ENCODE measurements at regions of chr1 and their contacts with region 1.

Region 1: GRCh38 chr1:211698161-211699026 is 23.0 kb upstream of the NEK2 start:
- DNase-seq: peak; percentile 60
- H3K4me3 ChIP-seq: no peak overlapping the region
- H3K27ac ChIP-seq: no peak overlapping the region
- H3K4me1 ChIP-seq: no peaks in the 10 kb centered on the region
- H3K27me3 ChIP-seq: peaks cover 10 to 11% of the 10 kb centered on the region in 2 experiments
- CTCF ChIP-seq: peak; percentile 96 to 98
- POLR2A ChIP-seq: no peak

Region 2: GRCh38 chr1:211680752-211681327 is 17.6 kb before region 1 on chr1:
- CTCF ChIA-PET with region 1: interaction called, 48 read pairs
- POLR2A ChIA-PET with region 1: no interaction called
- dilution Hi-C with region 1: no loop called
- intact Hi-C with region 1: no loop called
- DNase-seq: peak; percentile 86
- H3K4me3 ChIP-seq: no peak overlapping the region
- H3K27ac ChIP-seq: no peak overlapping the region
- H3K4me1 ChIP-seq: peaks cover 3% of the 10 kb centered on the region
- H3K27me3 ChIP-seq: peaks cover 0 to 2% of the 10 kb centered on the region in 2 experiments
- CTCF ChIP-seq: peak; percentile 59 to 66
- POLR2A ChIP-seq: no peak

Region 3: DNA sequence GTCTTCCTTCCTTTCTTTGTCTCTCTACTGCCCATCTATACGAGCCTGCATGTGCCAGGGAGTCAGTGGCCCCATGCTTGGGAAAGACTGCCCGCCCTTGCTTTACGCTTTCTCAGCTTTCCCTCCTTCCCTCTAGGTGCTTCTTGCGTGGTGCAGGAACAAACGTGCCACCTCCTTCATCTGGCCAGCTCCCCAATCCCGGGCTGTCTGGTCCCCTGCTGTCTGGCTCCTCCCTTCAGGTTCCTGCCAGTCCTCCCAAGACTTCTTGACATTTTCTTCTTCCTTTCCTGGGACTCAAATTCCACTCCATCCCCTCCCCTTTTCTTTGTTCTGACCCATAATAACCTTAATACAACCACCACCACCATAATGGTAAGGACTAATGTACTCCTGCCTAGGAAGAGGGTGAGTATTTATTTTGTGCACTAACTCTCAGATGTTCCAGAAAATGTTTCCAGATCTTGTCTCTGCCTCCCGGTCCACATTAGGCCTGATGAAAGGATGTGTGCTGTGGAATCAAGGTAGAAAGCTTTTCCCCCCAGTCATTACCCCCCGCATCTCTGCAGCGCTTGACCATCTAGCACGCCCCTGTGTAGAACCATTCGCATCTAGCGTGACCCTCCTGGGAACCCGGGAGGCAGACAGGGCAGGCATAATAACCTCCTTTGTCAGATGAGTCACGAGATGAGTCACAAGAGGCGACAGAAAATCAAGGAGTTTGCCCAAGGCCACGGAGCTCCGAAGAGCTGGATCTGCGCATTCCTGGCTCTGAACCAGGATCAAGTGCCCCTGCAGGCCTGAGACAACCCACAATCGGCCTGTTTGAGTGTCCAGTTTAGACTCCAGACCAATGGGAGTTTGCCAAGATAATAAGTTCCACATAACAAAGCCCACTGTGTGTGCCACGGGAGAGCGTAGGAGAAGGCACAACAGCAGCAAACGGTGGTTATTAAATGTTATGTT is 37.1 kb after region 1 on chr1:
- CTCF ChIA-PET with region 1: interaction called, 12 read pairs
- POLR2A ChIA-PET with region 1: no interaction called
- dilution Hi-C with region 1: no loop called
- intact Hi-C with region 1: no loop called
- DNase-seq: peak; percentile 40
- H3K4me3 ChIP-seq: no peak overlapping the region
- H3K27ac ChIP-seq: no peak overlapping the region
- H3K4me1 ChIP-seq: peaks cover 4% of the 10 kb centered on the region
- H3K27me3 ChIP-seq: peaks cover 0 to 3% of the 10 kb centered on the region in 2 experiments
- CTCF ChIP-seq: no peak
- POLR2A ChIP-seq: no peak

Region 4: GRCh38 chr1:211761400-211761799 is 63.0 kb after region 1 on chr1:
- CTCF ChIA-PET with region 1: interaction called, 11 read pairs
- POLR2A ChIA-PET with region 1: no interaction called
- dilution Hi-C with region 1: no loop called
- intact Hi-C with region 1: no loop called
- DNase-seq: no peak
- H3K4me3 ChIP-seq: no peak overlapping the region
- H3K27ac ChIP-seq: no peak overlapping the region
- H3K4me1 ChIP-seq: no peaks in the 10 kb centered on the region
- H3K27me3 ChIP-seq: no peaks in the 10 kb centered on the region
- CTCF ChIP-seq: no peak
- POLR2A ChIP-seq: no peak

Region 5: GRCh38 chr1:211788626-211789025 is 90.2 kb after region 1 on chr1:
- CTCF ChIA-PET with region 1: interaction called, 10 read pairs
- POLR2A ChIA-PET with region 1: no interaction called
- dilution Hi-C with region 1: no loop called
- intact Hi-C with region 1: loop called (anchors 5 kb)
- DNase-seq: no peak
- H3K4me3 ChIP-seq: no peak overlapping the region
- H3K27ac ChIP-seq: no peak overlapping the region
- H3K4me1 ChIP-seq: peaks cover 7% of the 10 kb centered on the region
- H3K27me3 ChIP-seq: no peaks in the 10 kb centered on the region
- CTCF ChIP-seq: no peak
- POLR2A ChIP-seq: no peak

Region 6: GRCh38 chr1:211959680-211960079 is 261.3 kb after region 1 on chr1:
- CTCF ChIA-PET with region 1: interaction called, 5 read pairs
- POLR2A ChIA-PET with region 1: no interaction called
- dilution Hi-C with region 1: no loop called
- intact Hi-C with region 1: loop called (anchors 5 kb)
- DNase-seq: no peak
- H3K4me3 ChIP-seq: no peak overlapping the region
- H3K27ac ChIP-seq: no peak overlapping the region
- H3K4me1 ChIP-seq: no peaks in the 10 kb centered on the region
- H3K27me3 ChIP-seq: no peaks in the 10 kb centered on the region
- CTCF ChIP-seq: no peak
- POLR2A ChIP-seq: no peak

Region 7: GRCh38 chr1:212368073-212368484 is 669.7 kb after region 1 on chr1:
- CTCF ChIA-PET with region 1: interaction called, 3 read pairs
- POLR2A ChIA-PET with region 1: no interaction called
- dilution Hi-C with region 1: no loop called
- intact Hi-C with region 1: loop called (anchors 1 kb)
- DNase-seq: peak; percentile 68
- H3K4me3 ChIP-seq: no peak overlapping the region
- H3K27ac ChIP-seq: no peak overlapping the region
- H3K4me1 ChIP-seq: no peaks in the 10 kb centered on the region
- H3K27me3 ChIP-seq: no peaks in the 10 kb centered on the region
- CTCF ChIP-seq: peak; percentile 77 to 78
- POLR2A ChIP-seq: no peak